ENCODE measurements at regions of chr12 and their contacts with region 1.

Region 1: GRCh38 chr12:116708826-116709756 is 28.8 kb downstream of the SPRING1 start:
- DNase-seq: peak; percentile 46
- H3K4me3 ChIP-seq: no peak overlapping the region
- H3K27ac ChIP-seq: no peak overlapping the region
- H3K4me1 ChIP-seq: peaks cover 19% of the 10 kb centered on the region
- H3K27me3 ChIP-seq: no peaks in the 10 kb centered on the region
- CTCF ChIP-seq: peak; percentile 58 to 73

Region 2: GRCh38 chr12:116066381-116067230 is 642.5 kb before region 1 on chr12:
- CTCF ChIA-PET with region 1: no interaction called
- dilution Hi-C with region 1: no loop called
- in situ Hi-C with region 1: no loop called
- intact Hi-C with region 1: loop called (anchors 2 kb)
- DNase-seq: no peak
- H3K4me3 ChIP-seq: no peak overlapping the region
- H3K27ac ChIP-seq: no peak overlapping the region
- H3K4me1 ChIP-seq: no peaks in the 10 kb centered on the region
- H3K27me3 ChIP-seq: no peaks in the 10 kb centered on the region
- CTCF ChIP-seq: peak; percentile 77 to 83

Region 3: GRCh38 chr12:116737774-116738700 is 28.9 kb after region 1 on chr12 and contains the starts of genes RNFT2 and SPRING1:
- CTCF ChIA-PET with region 1: no interaction called
- dilution Hi-C with region 1: no loop called
- in situ Hi-C with region 1: no loop called
- intact Hi-C with region 1: loop called (anchors 1 kb)
- DNase-seq: peak; percentile 99
- H3K4me3 ChIP-seq: peak within 1 kb of the TSS; percentile 63 to 94 (median 80)
- H3K27ac ChIP-seq: peak within 1 kb of the TSS; percentile 33
- H3K4me1 ChIP-seq: peaks cover 5% of the 10 kb centered on the region
- H3K27me3 ChIP-seq: no peaks in the 10 kb centered on the region
- CTCF ChIP-seq: no peak
- total RNA-seq, gene RNFT2: 2.0 to 3.0 TPM
- total RNA-seq, gene SPRING1: 31.2 to 45.0 TPM

Region 4: DNA sequence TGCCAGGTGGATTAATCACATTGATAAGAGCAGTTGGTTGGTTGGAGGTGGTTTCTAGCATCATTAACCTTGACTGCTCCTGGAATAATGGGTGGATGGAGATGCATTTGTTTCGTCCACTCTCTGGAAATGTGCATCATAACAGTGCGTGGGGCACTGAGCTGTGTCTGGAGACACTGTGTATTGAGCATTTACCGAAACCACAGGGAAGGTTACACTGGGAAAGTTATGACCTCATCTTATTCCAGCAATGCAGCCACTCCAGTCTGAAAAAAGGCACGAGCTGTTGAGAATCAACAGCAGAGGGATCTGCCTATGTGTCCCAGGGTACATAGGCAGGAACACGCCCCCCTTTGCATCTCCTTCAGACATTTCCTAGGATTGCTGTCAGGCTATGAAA is 56.2 kb after region 1 on chr12:
- CTCF ChIA-PET with region 1: no interaction called
- dilution Hi-C with region 1: loop called (anchors 5 kb)
- in situ Hi-C with region 1: no loop called
- intact Hi-C with region 1: no loop called
- DNase-seq: no peak
- H3K4me3 ChIP-seq: no peak overlapping the region
- H3K27ac ChIP-seq: no peak overlapping the region
- H3K4me1 ChIP-seq: no peaks in the 10 kb centered on the region
- H3K27me3 ChIP-seq: no peaks in the 10 kb centered on the region
- CTCF ChIP-seq: no peak

Measured in mammary epithelial cell (primary cell).